ENCODE measurements at regions of chr2 and their contacts with region 1.

Region 1: GRCh38 chr2:46803911-46804670 is 111.5 kb downstream of the MCFD2 start:
- DNase-seq: peak; percentile 75
- H3K4me3 Mint-ChIP-seq: no peak overlapping the region
- H3K27ac Mint-ChIP-seq: peak overlapping the region; percentile 11
- H3K4me1 Mint-ChIP-seq: peaks cover 46% of the 10 kb centered on the region
- H3K27me3 Mint-ChIP-seq: no peaks in the 10 kb centered on the region
- CTCF ChIP-seq: no peak

Region 2: GRCh38 chr2:46847235-46848068 is 43.4 kb after region 1 on chr2:
- CTCF ChIA-PET with region 1: interaction called, 3 read pairs
- intact Hi-C with region 1: loop called (anchors 5 kb)
- DNase-seq: peak; percentile 92
- H3K4me3 Mint-ChIP-seq: no peak overlapping the region
- H3K27ac Mint-ChIP-seq: peak overlapping the region; percentile 48
- H3K4me1 Mint-ChIP-seq: peaks cover 54% of the 10 kb centered on the region
- H3K27me3 Mint-ChIP-seq: peaks cover 9% of the 10 kb centered on the region
- CTCF ChIP-seq: no peak